ENCODE measurements at regions of chr1 and their contacts with region 1.

Region 1: DNA sequence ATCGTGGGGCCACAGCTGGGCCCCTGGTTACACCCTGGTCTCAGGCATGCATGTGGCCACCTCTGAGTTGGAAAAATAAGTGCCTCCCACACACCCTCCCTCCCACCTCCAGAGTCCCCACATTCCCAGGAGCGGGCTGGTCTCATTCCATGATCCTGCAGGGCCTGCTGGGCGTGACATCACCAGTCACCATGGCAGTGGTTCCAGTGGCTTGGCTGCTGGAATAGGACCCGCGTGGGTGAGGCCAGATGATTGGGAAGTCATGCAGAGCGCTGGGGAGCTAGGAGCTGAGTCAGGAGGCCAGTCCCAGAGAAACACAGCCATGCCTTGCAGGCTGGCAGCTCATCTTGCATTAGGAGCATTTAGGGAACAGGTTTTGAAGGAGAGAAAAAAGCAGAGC is 125.4 kb upstream of the TMEM51 start:
- DNase-seq: peak; percentile 96 to 97 (median 97)
- H3K4me3 ChIP-seq: no peak overlapping the region
- H3K27ac ChIP-seq: peak overlapping the region; percentile 85 to 88
- H3K4me1 ChIP-seq: peaks cover 10 to 56% (median 45%) of the 10 kb centered on the region in 3 donors
- H3K27me3 ChIP-seq: no peaks in the 10 kb centered on the region
- CTCF ChIP-seq: no peak

Region 2: GRCh38 chr1:14804626-14805025 is 223.5 kb before region 1 on chr1:
- intact Hi-C with region 1: no loop called
- DNase-seq: no peak
- H3K4me3 ChIP-seq: no peak overlapping the region
- H3K27ac ChIP-seq: no peak overlapping the region
- H3K4me1 ChIP-seq: no peaks in the 10 kb centered on the region
- H3K27me3 ChIP-seq: no peaks in the 10 kb centered on the region
- CTCF ChIP-seq: peak; percentile 8

Region 3: DNA sequence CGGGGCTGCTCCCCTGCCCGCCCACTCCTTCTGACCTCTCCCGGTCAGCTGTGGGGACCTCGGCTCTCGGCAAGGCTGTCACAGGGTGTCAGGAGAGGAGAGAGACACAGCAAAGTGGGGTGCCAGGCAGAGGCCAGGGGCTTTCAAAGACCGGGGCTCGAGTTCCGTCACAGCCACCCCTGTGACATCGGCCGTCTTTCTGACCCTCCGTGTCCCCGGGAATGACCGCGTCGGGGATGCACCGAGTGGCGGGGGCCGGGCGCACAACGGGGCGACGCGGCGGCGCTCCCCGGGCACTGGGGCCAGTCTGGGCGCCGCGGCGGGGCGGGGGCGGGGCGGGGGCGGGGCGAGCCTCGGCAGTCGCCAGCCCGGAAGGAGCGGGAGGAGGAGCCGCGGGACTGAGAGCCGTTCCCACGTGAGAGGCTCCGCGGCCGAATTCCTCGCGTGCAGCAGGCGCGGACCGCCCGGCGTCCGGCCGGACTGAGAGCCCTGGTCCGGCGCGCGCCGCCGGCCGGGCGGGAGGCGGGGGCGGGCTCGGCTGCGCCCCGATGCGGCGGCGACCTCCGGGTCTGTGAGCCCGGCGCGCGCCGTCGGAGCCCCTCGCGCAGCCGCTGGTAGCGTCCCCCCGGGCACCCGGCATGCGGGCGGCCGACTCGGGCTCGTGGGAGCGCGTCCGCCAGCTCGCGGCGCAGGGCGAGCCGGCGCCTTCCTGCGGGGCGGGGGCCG is 104.2 kb before region 1 on chr1:
- intact Hi-C with region 1: loop called (anchors 10 kb)
- DNase-seq: peak; percentile 80 to 94 (median 84)
- H3K4me3 ChIP-seq: peak overlapping the region in 1 of 3 donors; percentile 34
- H3K27ac ChIP-seq: peak overlapping the region; percentile 63 to 65
- H3K4me1 ChIP-seq: peaks cover 5 to 26% (median 5%) of the 10 kb centered on the region in 3 donors
- H3K27me3 ChIP-seq: peaks cover 2% of the 10 kb centered on the region
- CTCF ChIP-seq: peak; percentile 3

Measured in kidney (tissue), 22 donors.